Naive thymus-derived CD4-positive, alpha-beta T cell (primary cell): ENCODE measurements at regions of chr3 and their contacts with region 1.

Region 1: GRCh38 chr3:150763122-150763841 is at the start of gene SIAH2:
- DNase-seq: peak; percentile 92 to 95 (median 94)
- ATAC-seq: peak; percentile 89
- H3K4me3 ChIP-seq: peak within 1 kb of the TSS; percentile 81
- H3K4me3 Mint-ChIP-seq: peak within 1 kb of the TSS; percentile 97 to 99 (median 98)
- H3K27ac ChIP-seq: peak within 1 kb of the TSS; percentile 99
- H3K27ac Mint-ChIP-seq: peak within 1 kb of the TSS; percentile 99 to 100 (median 100)
- H3K4me1 ChIP-seq: peaks cover 20 to 22% of the 10 kb centered on the region in 2 donors
- H3K4me1 Mint-ChIP-seq: peaks cover 23 to 59% (median 45%) of the 10 kb centered on the region in 7 donors
- H3K27me3 ChIP-seq: no peaks in the 10 kb centered on the region
- H3K27me3 Mint-ChIP-seq: no peaks in the 10 kb centered on the region
- total RNA-seq, gene SIAH2: 19.8 to 39.2 (median 31.0) TPM

Region 2: GRCh38 chr3:149086232-149086988 is 1676.9 kb before region 1 on chr3 and contains the start of gene HLTF:
- CTCF ChIA-PET with region 1: no interaction called
- POLR2A ChIA-PET with region 1: no interaction called
- intact Hi-C with region 1: loop called in 1 of 2 experiments (anchors 5 kb)
- DNase-seq: peak; percentile 75 to 93 (median 90)
- ATAC-seq: peak; percentile 99
- H3K4me3 ChIP-seq: peak within 1 kb of the TSS; percentile 97
- H3K4me3 Mint-ChIP-seq: peak within 1 kb of the TSS; percentile 84 to 100 (median 97)
- H3K27ac ChIP-seq: peak within 1 kb of the TSS; percentile 64
- H3K27ac Mint-ChIP-seq: peak within 1 kb of the TSS; percentile 54 to 95 (median 86)
- H3K4me1 ChIP-seq: peaks cover 4 to 18% of the 10 kb centered on the region in 2 donors
- H3K4me1 Mint-ChIP-seq: peaks cover 15 to 28% (median 22%) of the 10 kb centered on the region in 7 donors
- H3K27me3 ChIP-seq: no peaks in the 10 kb centered on the region
- H3K27me3 Mint-ChIP-seq: no peaks in the 10 kb centered on the region
- total RNA-seq, gene HLTF: 9.1 to 26.5 (median 17.3) TPM

Region 3: GRCh38 chr3:150408221-150409102 is 354.8 kb before region 1 on chr3 and contains the start of gene TSC22D2:
- CTCF ChIA-PET with region 1: no interaction called
- POLR2A ChIA-PET with region 1: interaction called, 24 read pairs
- intact Hi-C with region 1: loop called (anchors 1 kb)
- DNase-seq: peak; percentile 94 to 99 (median 98)
- ATAC-seq: peak; percentile 79
- H3K4me3 ChIP-seq: peak within 1 kb of the TSS; percentile 96
- H3K4me3 Mint-ChIP-seq: peak within 1 kb of the TSS; percentile 88 to 98 (median 91)
- H3K27ac ChIP-seq: peak within 1 kb of the TSS; percentile 98
- H3K27ac Mint-ChIP-seq: peak within 1 kb of the TSS; percentile 89 to 100 (median 98)
- H3K4me1 ChIP-seq: peaks cover 7 to 8% of the 10 kb centered on the region in 2 donors
- H3K4me1 Mint-ChIP-seq: peaks cover 25 to 41% (median 39%) of the 10 kb centered on the region in 7 donors
- H3K27me3 ChIP-seq: no peaks in the 10 kb centered on the region
- H3K27me3 Mint-ChIP-seq: peaks cover 0 to 13% (median 0%) of the 10 kb centered on the region in 5 donors
- total RNA-seq, gene TSC22D2: 17.9 to 42.1 (median 27.3) TPM

Region 4: GRCh38 chr3:150603153-150603979 is 159.9 kb before region 1 on chr3 and contains the start of gene SELENOT:
- CTCF ChIA-PET with region 1: no interaction called
- POLR2A ChIA-PET with region 1: interaction called, 40 read pairs
- intact Hi-C with region 1: loop called (anchors 1 kb)
- DNase-seq: peak; percentile 91 to 97 (median 96)
- ATAC-seq: peak; percentile 89
- H3K4me3 ChIP-seq: peak within 1 kb of the TSS; percentile 76
- H3K4me3 Mint-ChIP-seq: peak within 1 kb of the TSS; percentile 93 to 100 (median 98)
- H3K27ac ChIP-seq: peak within 1 kb of the TSS; percentile 90
- H3K27ac Mint-ChIP-seq: peak within 1 kb of the TSS; percentile 97 to 100 (median 99)
- H3K4me1 ChIP-seq: peaks cover 27 to 41% of the 10 kb centered on the region in 2 donors
- H3K4me1 Mint-ChIP-seq: peaks cover 43 to 78% (median 70%) of the 10 kb centered on the region in 7 donors
- H3K27me3 ChIP-seq: no peaks in the 10 kb centered on the region
- H3K27me3 Mint-ChIP-seq: no peaks in the 10 kb centered on the region
- total RNA-seq, gene SELENOT: 51.3 to 104 (median 78.1) TPM

Region 5: DNA sequence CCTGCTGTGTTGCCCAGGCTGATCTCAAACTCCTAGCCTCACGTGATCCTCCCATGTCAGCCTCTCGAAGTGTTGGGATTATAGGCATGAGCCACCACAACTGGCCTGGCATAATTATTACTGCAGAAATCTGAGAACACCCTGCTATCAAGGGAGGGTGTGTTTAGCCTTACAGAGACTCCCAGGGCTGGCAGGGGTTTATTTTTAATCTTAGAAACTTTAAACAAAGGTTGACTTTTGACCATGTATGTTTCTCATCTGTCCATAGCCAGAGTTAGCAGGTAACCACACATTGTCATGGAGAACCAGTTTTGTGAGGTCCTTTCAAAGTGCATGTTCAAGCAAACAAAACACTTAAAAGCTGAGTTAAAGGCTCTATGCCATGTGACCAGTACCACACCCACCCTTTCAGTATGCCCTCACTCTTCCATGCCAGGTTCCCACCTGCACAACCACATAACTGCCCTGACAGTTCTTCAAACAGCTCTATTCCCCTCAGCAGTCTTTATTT is 11.5 kb before region 1 on chr3:
- CTCF ChIA-PET with region 1: interaction called, 3 read pairs
- POLR2A ChIA-PET with region 1: interaction called, 24 read pairs
- intact Hi-C with region 1: loop called in 1 of 2 experiments (anchors 1 kb)
- DNase-seq: no peak
- ATAC-seq: no peak
- H3K4me3 ChIP-seq: no peak overlapping the region
- H3K4me3 Mint-ChIP-seq: no peak overlapping the region
- H3K27ac ChIP-seq: no peak overlapping the region
- H3K27ac Mint-ChIP-seq: peak overlapping the region in 5 of 9 donors; percentile 7 to 71 (median 53)
- H3K4me1 ChIP-seq: peaks cover 1 to 10% of the 10 kb centered on the region in 2 donors
- H3K4me1 Mint-ChIP-seq: peaks cover 47 to 92% (median 78%) of the 10 kb centered on the region in 7 donors
- H3K27me3 ChIP-seq: no peaks in the 10 kb centered on the region
- H3K27me3 Mint-ChIP-seq: no peaks in the 10 kb centered on the region

Region 6: GRCh38 chr3:151203051-151203420 is 439.8 kb after region 1 on chr3 and contains the start of gene GPR171:
- CTCF ChIA-PET with region 1: no interaction called
- POLR2A ChIA-PET with region 1: interaction called, 15 read pairs
- intact Hi-C with region 1: loop called (anchors 2 kb)
- DNase-seq: peak in 8 of 9 donors; percentile 62 to 88 (median 82)
- ATAC-seq: peak; percentile 95
- H3K4me3 ChIP-seq: peak within 1 kb of the TSS; percentile 79
- H3K4me3 Mint-ChIP-seq: peak within 1 kb of the TSS; percentile 72 to 94 (median 84)
- H3K27ac ChIP-seq: peak within 1 kb of the TSS; percentile 75
- H3K27ac Mint-ChIP-seq: peak within 1 kb of the TSS; percentile 76 to 98 (median 94)
- H3K4me1 ChIP-seq: peaks cover 45 to 57% of the 10 kb centered on the region in 2 donors
- H3K4me1 Mint-ChIP-seq: peaks cover 34 to 82% (median 71%) of the 10 kb centered on the region in 7 donors
- H3K27me3 ChIP-seq: no peaks in the 10 kb centered on the region
- H3K27me3 Mint-ChIP-seq: no peaks in the 10 kb centered on the region
- total RNA-seq, gene GPR171: 16.0 to 251 (median 63.4) TPM

Region 7: GRCh38 chr3:152471814-152472671 is 1708.8 kb after region 1 on chr3:
- CTCF ChIA-PET with region 1: no interaction called
- POLR2A ChIA-PET with region 1: no interaction called
- intact Hi-C with region 1: loop called in 1 of 2 experiments (anchors 10 kb)
- DNase-seq: peak; percentile 22 to 80 (median 72)
- ATAC-seq: peak; percentile 93
- H3K4me3 ChIP-seq: peak overlapping the region; percentile 32
- H3K4me3 Mint-ChIP-seq: peak overlapping the region; percentile 6 to 82 (median 72)
- H3K27ac ChIP-seq: peak overlapping the region; percentile 81
- H3K27ac Mint-ChIP-seq: peak overlapping the region; percentile 29 to 96 (median 88)
- H3K4me1 ChIP-seq: peaks cover 4 to 9% of the 10 kb centered on the region in 2 donors
- H3K4me1 Mint-ChIP-seq: peaks cover 0 to 21% (median 12%) of the 10 kb centered on the region in 7 donors
- H3K27me3 ChIP-seq: no peaks in the 10 kb centered on the region
- H3K27me3 Mint-ChIP-seq: peaks cover 0 to 16% (median 0%) of the 10 kb centered on the region in 5 donors